ENCODE measurements at regions of chr5 and their contacts with region 1.

Region 1: GRCh38 chr5:73591102-73591695 is 25.7 kb downstream of the UTP15 start:
- DNase-seq: peak; percentile 82
- H3K4me3 ChIP-seq: no peak overlapping the region
- H3K27ac ChIP-seq: no peak overlapping the region
- H3K4me1 ChIP-seq: peaks cover 18% of the 10 kb centered on the region
- H3K27me3 ChIP-seq: no peaks in the 10 kb centered on the region
- CTCF ChIP-seq: peak; percentile 49 to 56
- POLR2A ChIP-seq: no peak

Region 2: GRCh38 chr5:73464016-73464745 is 127.0 kb before region 1 on chr5:
- CTCF ChIA-PET with region 1: no interaction called
- POLR2A ChIA-PET with region 1: no interaction called
- dilution Hi-C with region 1: no loop called
- intact Hi-C with region 1: no loop called
- DNase-seq: peak; percentile 94
- H3K4me3 ChIP-seq: no peak overlapping the region
- H3K27ac ChIP-seq: no peak overlapping the region
- H3K4me1 ChIP-seq: no peaks in the 10 kb centered on the region
- H3K27me3 ChIP-seq: peaks cover 37 to 53% of the 10 kb centered on the region in 2 experiments
- CTCF ChIP-seq: no peak
- POLR2A ChIP-seq: no peak

Region 3: GRCh38 chr5:73513960-73514359 is 77.2 kb before region 1 on chr5:
- CTCF ChIA-PET with region 1: no interaction called
- POLR2A ChIA-PET with region 1: no interaction called
- dilution Hi-C with region 1: no loop called
- intact Hi-C with region 1: no loop called
- DNase-seq: no peak
- H3K4me3 ChIP-seq: no peak overlapping the region
- H3K27ac ChIP-seq: no peak overlapping the region
- H3K4me1 ChIP-seq: no peaks in the 10 kb centered on the region
- H3K27me3 ChIP-seq: no peaks in the 10 kb centered on the region
- CTCF ChIP-seq: no peak
- POLR2A ChIP-seq: no peak

Region 4: GRCh38 chr5:73625944-73626811 is 35.0 kb after region 1 on chr5 and contains the start of gene ARHGEF28:
- CTCF ChIA-PET with region 1: interaction called, 17 read pairs
- POLR2A ChIA-PET with region 1: no interaction called
- dilution Hi-C with region 1: no loop called
- intact Hi-C with region 1: loop called (anchors 5 kb)
- DNase-seq: peak; percentile 47
- H3K4me3 ChIP-seq: peak within 1 kb of the TSS; percentile 48 to 83 (median 74)
- H3K27ac ChIP-seq: peak within 1 kb of the TSS; percentile 81
- H3K4me1 ChIP-seq: peaks cover 40% of the 10 kb centered on the region
- H3K27me3 ChIP-seq: no peaks in the 10 kb centered on the region
- CTCF ChIP-seq: no peak
- POLR2A ChIP-seq: peak; percentile 92
- total RNA-seq, gene ARHGEF28: 108 and 116 TPM in 2 replicates

Region 5: DNA sequence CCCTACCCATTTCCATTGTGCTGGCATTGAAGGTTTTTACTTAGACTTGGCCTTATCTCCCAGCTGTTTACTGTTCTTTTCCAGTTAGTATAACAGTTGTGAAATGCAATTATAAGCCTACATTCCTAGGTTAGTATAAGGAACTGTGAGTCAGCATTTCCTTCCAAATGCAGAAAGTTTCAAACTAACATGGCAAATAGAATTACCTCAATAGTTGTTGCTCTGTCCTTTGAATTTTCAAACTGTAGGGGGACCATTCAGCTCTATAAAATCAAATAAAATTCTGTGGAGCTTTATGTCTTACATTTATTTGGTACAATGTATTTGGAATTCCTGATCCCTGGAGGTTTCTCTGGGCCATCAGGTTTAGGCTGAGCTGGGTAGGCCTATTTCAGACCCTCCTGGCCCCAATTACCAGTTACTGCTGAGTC is 82.0 kb after region 1 on chr5:
- CTCF ChIA-PET with region 1: interaction called, 16 read pairs
- POLR2A ChIA-PET with region 1: no interaction called
- dilution Hi-C with region 1: no loop called
- intact Hi-C with region 1: no loop called
- DNase-seq: peak; percentile 91
- H3K4me3 ChIP-seq: no peak overlapping the region
- H3K27ac ChIP-seq: peak overlapping the region; percentile 74
- H3K4me1 ChIP-seq: peaks cover 33% of the 10 kb centered on the region
- H3K27me3 ChIP-seq: no peaks in the 10 kb centered on the region
- CTCF ChIP-seq: peak in 1 of 2 donors; percentile 6
- POLR2A ChIP-seq: no peak

Region 6: DNA sequence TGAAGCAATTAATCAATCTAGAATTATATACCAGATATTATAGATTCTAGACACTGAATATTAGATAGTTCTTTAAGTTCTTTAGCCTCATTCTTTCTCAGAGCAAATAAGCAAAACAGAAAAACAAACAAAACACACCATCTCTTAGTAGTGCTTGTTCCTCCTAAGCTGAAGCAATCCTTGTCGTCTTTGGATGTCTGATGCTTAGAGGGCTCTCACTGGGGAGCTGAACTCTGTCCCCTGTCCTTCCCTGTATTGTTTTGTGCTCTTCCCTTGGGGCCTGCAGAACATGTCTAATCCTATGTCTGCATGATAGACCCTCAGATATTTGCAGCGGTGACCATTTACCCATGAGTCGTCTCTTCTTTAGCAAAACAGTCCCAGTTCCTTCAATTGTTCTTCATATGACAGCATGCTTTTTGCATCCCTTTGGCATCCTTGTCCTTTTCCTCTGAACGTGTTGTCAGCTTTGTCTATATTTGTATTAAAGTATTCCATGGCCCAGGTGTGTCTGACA is 149.1 kb after region 1 on chr5:
- CTCF ChIA-PET with region 1: interaction called, 11 read pairs
- POLR2A ChIA-PET with region 1: no interaction called
- dilution Hi-C with region 1: no loop called
- intact Hi-C with region 1: no loop called
- DNase-seq: peak; percentile 55
- H3K4me3 ChIP-seq: no peak overlapping the region
- H3K27ac ChIP-seq: peak overlapping the region; percentile 52
- H3K4me1 ChIP-seq: peaks cover 41% of the 10 kb centered on the region
- H3K27me3 ChIP-seq: no peaks in the 10 kb centered on the region
- CTCF ChIP-seq: no peak
- POLR2A ChIP-seq: no peak

Region 7: GRCh38 chr5:73783828-73784227 is 192.6 kb after region 1 on chr5:
- CTCF ChIA-PET with region 1: interaction called, 24 read pairs
- POLR2A ChIA-PET with region 1: no interaction called
- dilution Hi-C with region 1: no loop called
- intact Hi-C with region 1: no loop called
- DNase-seq: peak; percentile 48
- H3K4me3 ChIP-seq: no peak overlapping the region
- H3K27ac ChIP-seq: no peak overlapping the region
- H3K4me1 ChIP-seq: peaks cover 7% of the 10 kb centered on the region
- H3K27me3 ChIP-seq: no peaks in the 10 kb centered on the region
- CTCF ChIP-seq: peak; percentile 14 to 24
- POLR2A ChIP-seq: no peak

Region 8: DNA sequence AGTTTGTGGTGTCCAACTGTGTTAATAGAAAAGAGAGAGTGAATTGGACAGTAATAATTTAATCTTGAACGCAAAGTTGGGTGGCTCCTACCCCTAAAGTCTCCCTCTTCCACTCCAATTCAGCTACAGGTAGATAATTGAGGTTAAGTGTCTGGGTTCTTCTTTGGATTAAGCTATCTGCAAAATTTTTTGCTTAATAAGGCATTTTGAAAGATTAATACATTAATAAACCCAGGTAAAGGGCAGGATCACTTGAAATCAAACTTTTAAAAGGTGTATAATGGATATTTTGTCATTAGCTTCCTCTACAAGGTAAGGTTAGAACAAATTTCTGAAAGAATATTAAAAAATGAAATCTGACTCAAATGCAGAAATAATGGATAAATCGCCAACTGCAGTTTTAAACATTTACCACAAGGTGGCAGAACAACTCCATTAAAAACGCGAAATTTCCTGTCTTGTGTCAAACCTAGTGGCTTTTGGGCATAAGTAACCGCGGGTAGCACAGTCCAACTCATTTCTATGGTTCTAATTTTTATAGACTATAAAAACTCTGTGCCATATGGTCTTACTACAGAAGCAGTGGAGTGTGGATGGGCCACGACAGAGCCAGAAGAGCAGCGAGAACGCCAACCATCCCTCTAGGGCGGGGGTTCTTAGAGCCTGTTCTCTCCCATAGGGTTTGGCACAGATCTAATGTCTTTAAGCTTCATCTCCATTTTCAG is 311.3 kb after region 1 on chr5:
- CTCF ChIA-PET with region 1: interaction called, 10 read pairs
- POLR2A ChIA-PET with region 1: no interaction called
- dilution Hi-C with region 1: no loop called
- intact Hi-C with region 1: loop called (anchors 2 kb)
- DNase-seq: peak; percentile 62
- H3K4me3 ChIP-seq: no peak overlapping the region
- H3K27ac ChIP-seq: no peak overlapping the region
- H3K4me1 ChIP-seq: no peaks in the 10 kb centered on the region
- H3K27me3 ChIP-seq: no peaks in the 10 kb centered on the region
- CTCF ChIP-seq: peak; percentile 42 to 45
- POLR2A ChIP-seq: no peak

Region 9: GRCh38 chr5:74075501-74076436 is 484.6 kb after region 1 on chr5:
- CTCF ChIA-PET with region 1: no interaction called
- POLR2A ChIA-PET with region 1: no interaction called
- dilution Hi-C with region 1: no loop called
- intact Hi-C with region 1: no loop called
- DNase-seq: peak; percentile 82
- H3K4me3 ChIP-seq: no peak overlapping the region
- H3K27ac ChIP-seq: no peak overlapping the region
- H3K4me1 ChIP-seq: peaks cover 14% of the 10 kb centered on the region
- H3K27me3 ChIP-seq: no peaks in the 10 kb centered on the region
- CTCF ChIP-seq: no peak
- POLR2A ChIP-seq: no peak

Region 10: GRCh38 chr5:74625742-74626241 is 1034.6 kb after region 1 on chr5:
- CTCF ChIA-PET with region 1: no interaction called
- POLR2A ChIA-PET with region 1: no interaction called
- dilution Hi-C with region 1: no loop called
- intact Hi-C with region 1: no loop called
- DNase-seq: peak; percentile 49
- H3K4me3 ChIP-seq: no peak overlapping the region
- H3K27ac ChIP-seq: no peak overlapping the region
- H3K4me1 ChIP-seq: peaks cover 16% of the 10 kb centered on the region
- H3K27me3 ChIP-seq: no peaks in the 10 kb centered on the region
- CTCF ChIP-seq: peak; percentile 18 to 36
- POLR2A ChIP-seq: no peak

Measured in endothelial cell of umbilical vein (primary cell).